WTC11 (cell line): ENCODE measurements at regions of chr3 and their contacts with region 1.

Region 1: GRCh38 chr3:186002884-186003472 is 65.2 kb upstream of the TRA2B start:
- DNase-seq: peak; percentile 36
- ATAC-seq: peak; percentile 94
- H3K4me3 Mint-ChIP-seq: no peak overlapping the region
- H3K27ac Mint-ChIP-seq: no peak overlapping the region
- H3K4me1 Mint-ChIP-seq: no peaks in the 10 kb centered on the region
- H3K27me3 Mint-ChIP-seq: no peaks in the 10 kb centered on the region
- CTCF ChIP-seq: 0 out of 2 replicates have a peak, but pooled peaks have one; percentile 31

Region 2: GRCh38 chr3:185983495-185984141 is 19.4 kb before region 1 on chr3:
- CTCF ChIA-PET with region 1: interaction called, 10 read pairs
- POLR2A ChIA-PET with region 1: no interaction called
- DNase-seq: peak; percentile 82
- ATAC-seq: peak; percentile 89
- H3K4me3 Mint-ChIP-seq: peak overlapping the region; percentile 55
- H3K27ac Mint-ChIP-seq: no peak overlapping the region
- H3K4me1 Mint-ChIP-seq: peaks cover 3% of the 10 kb centered on the region; the same call in 1 of the 2 replicates
- H3K27me3 Mint-ChIP-seq: peaks cover 10% of the 10 kb centered on the region; the same call in 1 of the 2 replicates
- CTCF ChIP-seq: peak; percentile 88

Region 3: GRCh38 chr3:186070996-186071395 is 68.0 kb after region 1 on chr3:
- CTCF ChIA-PET with region 1: interaction called, 13 read pairs
- POLR2A ChIA-PET with region 1: no interaction called
- DNase-seq: no peak
- ATAC-seq: no peak
- H3K4me3 Mint-ChIP-seq: no peak overlapping the region
- H3K27ac Mint-ChIP-seq: peak overlapping the region; percentile 34
- H3K4me1 Mint-ChIP-seq: no peaks in the 10 kb centered on the region
- H3K27me3 Mint-ChIP-seq: no peaks in the 10 kb centered on the region
- CTCF ChIP-seq: no peak

Region 4: GRCh38 chr3:186079925-186080324 is 76.9 kb after region 1 on chr3:
- CTCF ChIA-PET with region 1: interaction called, 11 read pairs
- POLR2A ChIA-PET with region 1: no interaction called
- DNase-seq: peak; percentile 22
- ATAC-seq: peak; percentile 85
- H3K4me3 Mint-ChIP-seq: peak overlapping the region; percentile 12
- H3K27ac Mint-ChIP-seq: peak overlapping the region; percentile 98
- H3K4me1 Mint-ChIP-seq: peaks cover 76% of the 10 kb centered on the region
- H3K27me3 Mint-ChIP-seq: no peaks in the 10 kb centered on the region
- CTCF ChIP-seq: no peak

Region 5: GRCh38 chr3:186097663-186098451 is 94.9 kb after region 1 on chr3:
- CTCF ChIA-PET with region 1: interaction called, 17 read pairs
- POLR2A ChIA-PET with region 1: no interaction called
- DNase-seq: peak; percentile 80
- ATAC-seq: peak; percentile 82
- H3K4me3 Mint-ChIP-seq: peak overlapping the region; percentile 82
- H3K27ac Mint-ChIP-seq: peak overlapping the region; percentile 98
- H3K4me1 Mint-ChIP-seq: peaks cover 82% of the 10 kb centered on the region
- H3K27me3 Mint-ChIP-seq: no peaks in the 10 kb centered on the region
- CTCF ChIP-seq: no peak

Region 6: GRCh38 chr3:186209810-186210752 is 207.1 kb after region 1 on chr3:
- CTCF ChIA-PET with region 1: interaction called, 18 read pairs
- POLR2A ChIA-PET with region 1: no interaction called
- DNase-seq: peak; percentile 26
- ATAC-seq: peak; percentile 83
- H3K4me3 Mint-ChIP-seq: no peak overlapping the region
- H3K27ac Mint-ChIP-seq: peak overlapping the region; percentile 67; the same call in 1 of the 2 replicates
- H3K4me1 Mint-ChIP-seq: peaks cover 49% of the 10 kb centered on the region
- H3K27me3 Mint-ChIP-seq: no peaks in the 10 kb centered on the region
- CTCF ChIP-seq: no peak